RWPE1 (cell line): ENCODE measurements at regions of chr20 and their contacts with region 1.

Region 1: DNA sequence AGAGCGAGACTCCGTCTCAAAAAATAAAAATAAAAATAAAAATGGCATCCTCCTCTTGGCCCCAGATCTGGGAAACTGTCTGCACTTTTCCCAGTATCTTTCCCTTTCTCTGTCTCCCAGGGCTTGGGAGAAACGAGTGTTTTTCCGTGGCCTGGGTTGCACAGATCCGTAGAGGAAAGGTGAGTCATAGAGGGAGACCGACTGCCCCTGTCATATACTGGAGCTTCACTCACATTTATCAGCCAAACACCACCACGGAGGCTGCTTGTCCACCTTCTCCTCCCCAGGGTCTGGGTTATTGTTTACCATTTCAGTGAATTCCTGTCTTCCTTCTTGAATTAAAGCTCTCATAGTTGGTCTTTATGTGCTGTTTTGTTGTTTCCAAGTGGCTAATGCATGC is 31.9 kb upstream of the EIF2S2 start:
- DNase-seq: no peak
- H3K27ac ChIP-seq: no peak overlapping the region
- CTCF ChIP-seq: no peak

Region 2: GRCh38 chr20:34129518-34130162 is 14.3 kb before region 1 on chr20:
- CTCF ChIA-PET with region 1: interaction called, 10 read pairs
- POLR2A ChIA-PET with region 1: no interaction called
- DNase-seq: peak; percentile 85
- H3K27ac ChIP-seq: no peak overlapping the region
- CTCF ChIP-seq: peak; percentile 98